ENCODE measurements at regions of chr3 and their contacts with region 1.

Region 1: GRCh38 chr3:30347679-30348216 is 258.7 kb upstream of the TGFBR2 start:
- DNase-seq: peak; percentile 73
- H3K4me3 Mint-ChIP-seq: peak overlapping the region; percentile 8
- H3K27ac Mint-ChIP-seq: peak overlapping the region; percentile 80
- H3K4me1 Mint-ChIP-seq: peaks cover 89% of the 10 kb centered on the region
- H3K27me3 Mint-ChIP-seq: no peaks in the 10 kb centered on the region

Region 2: DNA sequence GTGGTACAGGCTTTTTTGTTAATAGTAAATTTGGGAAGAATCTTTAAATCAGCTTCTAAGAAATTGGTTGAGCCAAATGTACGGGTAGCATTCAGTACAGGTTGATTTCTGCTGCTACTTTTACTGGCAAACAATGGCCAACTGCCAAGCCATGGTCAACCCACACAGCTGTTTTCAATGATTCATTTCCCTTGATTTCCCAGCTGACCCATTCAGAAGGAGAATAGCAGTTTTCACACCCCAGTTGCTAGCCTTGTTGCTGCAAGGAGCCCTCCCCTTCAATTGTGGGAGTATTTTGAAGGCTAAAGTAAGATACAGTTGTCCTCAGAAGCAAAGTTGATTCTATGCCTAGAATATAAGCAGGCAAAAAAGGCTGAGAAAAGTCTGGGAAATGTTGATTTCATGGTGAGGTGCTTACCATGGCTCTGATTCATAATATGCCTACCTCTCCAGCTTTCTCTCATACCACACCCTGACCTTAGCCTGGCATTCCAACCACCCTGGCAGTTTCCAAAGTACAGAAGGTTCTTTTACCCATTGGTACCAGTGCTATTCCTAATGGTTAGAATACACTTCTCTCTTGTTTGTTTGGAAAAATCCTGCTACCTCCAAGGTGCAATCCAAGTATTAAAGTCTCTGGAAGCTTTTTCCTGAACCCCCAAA is 61.6 kb before region 1 on chr3:
- CTCF ChIA-PET with region 1: no interaction called
- intact Hi-C with region 1: loop called (anchors 2 kb)
- DNase-seq: peak; percentile 19
- H3K4me3 Mint-ChIP-seq: no peak overlapping the region
- H3K27ac Mint-ChIP-seq: no peak overlapping the region
- H3K4me1 Mint-ChIP-seq: peaks cover 27% of the 10 kb centered on the region
- H3K27me3 Mint-ChIP-seq: no peaks in the 10 kb centered on the region

Region 3: DNA sequence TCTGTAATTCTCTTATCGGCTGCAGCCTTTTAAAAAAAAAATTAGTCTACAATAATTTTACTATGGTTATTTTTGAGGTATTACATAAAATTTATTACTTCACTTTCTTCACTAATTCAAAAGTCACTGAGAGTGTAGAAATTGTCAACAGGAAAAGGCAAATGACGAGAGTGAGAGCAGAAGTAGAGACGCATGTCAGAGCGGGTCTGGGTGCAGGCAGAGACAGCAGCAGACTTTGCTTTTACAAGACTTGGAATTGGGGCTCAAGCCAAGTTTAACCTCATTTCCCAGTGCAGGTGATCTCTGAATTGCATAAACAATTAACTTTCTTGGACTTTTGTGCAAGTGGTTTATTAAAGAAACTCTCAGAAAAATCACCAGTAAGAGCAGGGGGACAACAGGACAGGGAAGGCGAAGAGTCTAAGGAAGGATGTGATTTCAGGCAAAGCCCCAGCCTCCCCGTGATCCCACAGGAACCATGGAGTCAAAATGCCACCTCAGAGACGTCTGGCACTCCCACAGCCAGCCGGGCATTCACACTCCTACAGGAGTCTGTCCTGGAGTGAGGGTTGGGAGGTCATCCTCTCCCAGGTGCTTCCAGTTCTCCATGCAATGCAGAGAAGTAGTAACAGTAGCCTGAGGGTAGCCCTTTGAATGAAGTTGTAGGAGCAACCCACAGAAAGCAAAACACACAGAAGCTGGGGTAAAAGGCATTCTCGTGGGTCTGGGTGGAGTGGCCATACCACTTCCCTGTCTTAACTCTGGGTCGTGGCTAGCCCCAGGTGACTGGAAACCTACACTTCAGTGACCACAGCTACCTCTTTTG is 15.3 kb before region 1 on chr3:
- CTCF ChIA-PET with region 1: interaction called, 4 read pairs
- intact Hi-C with region 1: loop called (anchors 1 kb)
- DNase-seq: peak; percentile 58
- H3K4me3 Mint-ChIP-seq: peak overlapping the region; percentile 65
- H3K27ac Mint-ChIP-seq: peak overlapping the region; percentile 75
- H3K4me1 Mint-ChIP-seq: peaks cover 33% of the 10 kb centered on the region
- H3K27me3 Mint-ChIP-seq: no peaks in the 10 kb centered on the region

Region 4: DNA sequence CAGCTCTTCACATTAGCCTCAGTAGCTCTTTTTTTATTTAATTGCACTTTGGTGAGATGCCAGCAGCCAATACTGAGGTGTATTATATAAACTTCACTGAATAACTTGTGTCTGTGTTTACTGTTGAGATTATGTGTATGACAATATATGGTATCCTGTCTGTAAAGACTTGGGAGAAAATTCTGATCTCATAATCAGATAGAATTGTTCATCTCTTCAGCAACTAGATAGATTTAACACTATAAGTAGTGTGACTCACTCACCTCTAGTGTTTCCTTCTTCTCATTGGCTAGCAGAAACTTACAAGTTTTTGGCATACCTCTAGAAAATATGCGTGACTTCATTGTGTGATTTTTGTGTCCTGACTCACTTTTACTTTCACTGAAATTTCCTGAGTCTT is 191.0 kb after region 1 on chr3:
- CTCF ChIA-PET with region 1: no interaction called
- intact Hi-C with region 1: loop called (anchors 2 kb)
- DNase-seq: no peak
- H3K4me3 Mint-ChIP-seq: no peak overlapping the region
- H3K27ac Mint-ChIP-seq: no peak overlapping the region
- H3K4me1 Mint-ChIP-seq: peaks cover 19% of the 10 kb centered on the region
- H3K27me3 Mint-ChIP-seq: no peaks in the 10 kb centered on the region

Region 5: GRCh38 chr3:30658328-30659052 is 310.7 kb after region 1 on chr3:
- CTCF ChIA-PET with region 1: no interaction called
- intact Hi-C with region 1: loop called (anchors 1 kb)
- DNase-seq: peak; percentile 62
- H3K4me3 Mint-ChIP-seq: peak overlapping the region; percentile 62
- H3K27ac Mint-ChIP-seq: peak overlapping the region; percentile 97
- H3K4me1 Mint-ChIP-seq: peaks cover 98% of the 10 kb centered on the region
- H3K27me3 Mint-ChIP-seq: no peaks in the 10 kb centered on the region

Region 6: GRCh38 chr3:31247850-31248562 is 900.3 kb after region 1 on chr3:
- CTCF ChIA-PET with region 1: no interaction called
- intact Hi-C with region 1: loop called (anchors 5 kb)
- DNase-seq: peak; percentile 73
- H3K4me3 Mint-ChIP-seq: no peak overlapping the region
- H3K27ac Mint-ChIP-seq: no peak overlapping the region
- H3K4me1 Mint-ChIP-seq: peaks cover 53% of the 10 kb centered on the region
- H3K27me3 Mint-ChIP-seq: peaks cover 4% of the 10 kb centered on the region